ENCODE measurements at regions of chr3 and their contacts with region 1.

Region 1: GRCh38 chr3:32510075-32510724 is 7.5 kb upstream of the CMTM6 start:
- DNase-seq: peak; percentile 16
- H3K4me3 ChIP-seq: no peak overlapping the region
- CTCF ChIP-seq: peak; percentile 70

Region 2: GRCh38 chr3:32493437-32494414 is 16.5 kb before region 1 on chr3:
- CTCF ChIA-PET with region 1: interaction called, 16 read pairs
- POLR2A ChIA-PET with region 1: no interaction called
- DNase-seq: no peak
- H3K4me3 ChIP-seq: no peak overlapping the region
- CTCF ChIP-seq: no peak

Region 3: DNA sequence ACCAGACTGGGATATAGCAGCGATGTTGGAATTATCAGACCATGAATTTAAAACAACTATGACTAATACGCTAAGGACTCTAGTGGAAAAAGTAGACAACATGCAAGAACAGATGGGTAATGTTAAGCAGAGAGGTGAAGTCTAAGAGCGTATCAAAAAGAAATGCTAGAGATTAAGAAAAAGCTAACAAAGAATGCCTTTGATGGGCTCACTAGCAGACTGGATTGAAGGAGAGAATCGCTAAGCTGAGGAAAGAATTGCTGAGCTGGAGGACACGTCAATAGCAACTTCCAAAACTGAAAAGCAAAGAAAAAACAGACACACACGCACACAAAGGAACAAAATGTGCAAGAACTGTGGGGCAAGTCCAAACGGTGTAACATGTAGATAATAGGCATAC is 12.5 kb after region 1 on chr3:
- CTCF ChIA-PET with region 1: interaction called, 29 read pairs
- POLR2A ChIA-PET with region 1: no interaction called
- DNase-seq: no peak
- H3K4me3 ChIP-seq: no peak overlapping the region
- CTCF ChIP-seq: no peak

Region 4: DNA sequence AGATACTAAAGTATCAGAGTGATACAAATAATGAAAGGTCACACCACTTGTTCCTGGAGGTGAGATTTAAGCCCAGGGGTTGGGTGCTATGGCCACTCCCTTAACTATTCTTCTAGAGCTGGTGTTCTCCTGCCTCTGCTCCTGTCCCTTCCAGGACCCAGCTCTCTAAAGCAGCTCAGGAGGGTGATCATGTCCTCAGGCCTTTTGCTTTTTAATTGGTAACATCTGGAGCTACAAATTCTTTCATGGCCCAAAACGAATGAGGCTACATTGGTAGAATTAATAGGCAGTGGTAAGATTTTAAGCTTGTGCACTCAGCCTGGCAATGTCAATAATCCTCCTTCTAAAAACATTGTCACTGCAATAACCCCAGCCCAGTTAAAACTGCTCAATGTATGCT is 136.6 kb after region 1 on chr3:
- CTCF ChIA-PET with region 1: interaction called, 13 read pairs
- POLR2A ChIA-PET with region 1: no interaction called
- DNase-seq: peak; percentile 4
- H3K4me3 ChIP-seq: no peak overlapping the region
- CTCF ChIP-seq: no peak

Region 5: DNA sequence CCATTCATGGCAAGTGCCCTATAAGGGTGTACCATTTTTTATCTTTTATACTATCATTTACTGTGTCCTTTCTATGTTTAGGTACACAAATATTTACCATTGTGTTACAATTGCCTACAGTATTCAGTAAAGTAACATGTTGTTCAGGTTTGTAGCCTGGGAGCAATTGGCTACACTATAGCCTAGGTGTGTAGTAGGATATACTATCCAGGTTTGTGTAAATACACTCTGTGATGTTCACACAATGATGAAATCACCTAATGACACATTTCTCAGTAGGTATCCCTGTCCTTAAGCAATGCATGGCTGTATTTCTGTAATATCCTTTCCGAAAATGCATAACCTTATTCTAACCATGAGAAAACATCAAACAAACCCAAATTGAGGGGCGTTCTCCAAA is 156.9 kb after region 1 on chr3:
- CTCF ChIA-PET with region 1: interaction called, 196 read pairs
- POLR2A ChIA-PET with region 1: no interaction called
- DNase-seq: no peak
- H3K4me3 ChIP-seq: no peak overlapping the region
- CTCF ChIP-seq: no peak